ENCODE measurements at regions of chr4 and their contacts with region 1.

Region 1: DNA sequence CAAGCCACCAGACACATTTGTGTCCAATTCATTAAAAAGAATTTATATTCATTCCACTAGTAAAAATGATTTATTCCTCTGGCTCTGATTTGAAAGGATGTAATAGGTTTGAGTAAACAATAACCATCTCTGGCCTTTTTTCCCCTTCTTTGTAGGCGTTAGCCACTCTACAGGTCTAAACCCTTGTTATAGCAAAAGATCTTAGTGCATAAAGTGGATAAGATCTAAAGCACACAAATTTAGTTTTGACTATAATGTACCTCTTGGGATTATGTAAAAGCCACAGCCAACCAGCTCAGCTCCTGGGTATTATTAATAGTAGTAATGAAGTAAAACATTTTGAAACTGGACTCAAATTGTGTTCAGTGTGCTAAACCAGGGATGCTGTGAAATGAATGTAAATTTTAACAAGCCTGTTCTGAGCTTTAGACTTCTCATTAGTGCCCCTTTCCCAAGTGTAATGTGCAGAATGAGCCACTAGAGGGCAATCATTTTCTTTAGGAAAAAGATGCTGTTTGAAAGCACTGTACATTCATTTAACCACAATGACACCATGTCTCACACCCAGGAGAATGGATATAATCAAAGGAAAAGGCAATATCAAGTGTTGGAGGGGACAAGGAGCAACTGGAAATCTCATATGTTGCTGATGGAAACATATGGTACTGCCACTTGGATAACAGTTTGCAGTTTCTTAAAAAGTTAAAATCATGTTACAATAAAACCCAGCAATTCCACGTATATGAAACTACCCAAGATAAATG is 69.7 kb downstream of the KLHL8 start:
- DNase-seq: peak in 25 of 42 donors; percentile 7 to 89 (median 64)

Region 2: DNA sequence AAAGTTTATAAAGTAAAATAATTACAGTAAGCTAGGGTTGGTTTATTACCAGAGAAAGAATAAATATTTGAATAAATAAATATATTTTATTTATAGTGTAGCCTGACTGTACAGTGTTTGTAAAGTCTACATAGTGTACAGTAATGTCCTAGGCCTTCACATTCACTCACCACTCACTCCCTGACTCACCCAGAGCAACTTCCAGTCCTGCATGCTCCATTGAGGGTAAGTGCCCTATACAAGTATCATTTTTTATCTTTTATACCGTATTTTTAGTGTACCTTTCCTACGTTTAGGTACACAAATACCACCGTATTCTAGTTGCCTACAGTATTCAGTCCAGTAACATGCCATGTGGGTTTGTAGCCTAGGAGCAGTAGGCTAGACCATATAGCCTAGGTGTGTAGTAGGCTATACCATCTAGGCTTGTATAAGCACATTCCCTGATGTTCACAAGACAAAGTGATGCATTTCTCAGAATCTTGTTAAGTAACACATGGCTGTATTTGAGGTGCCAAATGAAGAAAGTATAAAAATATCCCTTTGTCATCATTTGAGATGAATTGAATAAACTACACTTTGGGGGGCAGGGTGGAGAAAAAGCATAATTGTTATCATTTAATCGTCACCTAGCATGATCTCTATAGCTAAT is 84.5 kb after region 1 on chr4:
- intact Hi-C with region 1: loop called (anchors 2 kb)
- DNase-seq: no peak

Region 3: GRCh38 chr4:87317543-87317942 is 166.9 kb after region 1 on chr4:
- intact Hi-C with region 1: no loop called
- DNase-seq: no peak